ENCODE measurements at regions of chr1 and their contacts with region 1.

Region 1: GRCh38 chr1:220032911-220033310 is 13.4 kb downstream of the EPRS1 start:
- DNase-seq: no peak
- H3K4me3 ChIP-seq: no peak overlapping the region
- H3K27me3 ChIP-seq: no peaks in the 10 kb centered on the region
- CTCF ChIP-seq: no peak

Region 2: GRCh38 chr1:219917851-219918466 is 115.0 kb before region 1 on chr1:
- CTCF ChIA-PET with region 1: no interaction called
- POLR2A ChIA-PET with region 1: no interaction called
- DNase-seq: no peak
- H3K4me3 ChIP-seq: no peak overlapping the region
- H3K27me3 ChIP-seq: no peaks in the 10 kb centered on the region
- CTCF ChIP-seq: no peak

Region 3: GRCh38 chr1:220019071-220019470 is 13.8 kb before region 1 on chr1:
- CTCF ChIA-PET with region 1: no interaction called
- POLR2A ChIA-PET with region 1: no interaction called
- DNase-seq: no peak
- H3K4me3 ChIP-seq: no peak overlapping the region
- H3K27me3 ChIP-seq: no peaks in the 10 kb centered on the region
- CTCF ChIP-seq: no peak

Region 4: GRCh38 chr1:220044678-220045355 is 11.9 kb after region 1 on chr1:
- CTCF ChIA-PET with region 1: interaction called, 3 read pairs
- POLR2A ChIA-PET with region 1: interaction called, 18 read pairs
- DNase-seq: no peak
- H3K4me3 ChIP-seq: peak overlapping the region; percentile 99
- H3K27me3 ChIP-seq: no peaks in the 10 kb centered on the region
- CTCF ChIP-seq: no peak

Measured in BJ (cell line).